Posterior vena cava (tissue), 2 donors: ENCODE measurements at regions of chr9 and their contacts with region 1.

Region 1: DNA sequence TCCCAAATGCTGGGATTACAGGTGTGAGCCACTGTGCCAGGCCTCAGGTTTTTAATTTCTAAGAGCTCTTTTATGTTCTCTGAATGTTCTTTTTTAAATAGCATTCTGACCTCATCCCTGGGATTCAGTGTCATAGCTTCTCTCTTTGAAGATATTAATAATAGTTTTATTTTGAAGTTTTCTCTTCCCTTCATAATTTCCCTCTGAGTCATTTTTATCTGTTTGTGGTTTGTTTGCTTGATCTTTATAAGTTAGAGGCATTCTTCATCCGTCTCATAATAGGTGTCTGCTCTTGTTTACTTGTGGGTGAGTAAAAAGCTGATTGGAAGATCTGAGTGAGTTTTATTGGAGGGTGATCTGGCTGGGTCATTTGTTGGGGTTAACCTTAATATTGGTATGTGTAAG is 12.5 kb upstream of the MAMDC2 start:
- DNase-seq: no peak

Region 2: GRCh38 chr9:69295872-69296552 is 735.1 kb before region 1 on chr9:
- intact Hi-C with region 1: loop called in 1 of 2 experiments (anchors 5 kb)
- DNase-seq: no peak

Region 3: GRCh38 chr9:70020991-70021571 is 10.1 kb before region 1 on chr9:
- intact Hi-C with region 1: loop called in 1 of 2 experiments (anchors 1 kb)
- DNase-seq: no peak

Region 4: GRCh38 chr9:70100362-70100761 is 69.2 kb after region 1 on chr9:
- intact Hi-C with region 1: loop called in 1 of 2 experiments (anchors 10 kb)
- DNase-seq: no peak